Activated naive CD4-positive, alpha-beta T cell treated with anti-CD3 and anti-CD28 coated beads for 36 hours (primary cell): ENCODE measurements at regions of chr4 and their contacts with region 1.

Region 1: GRCh38 chr4:102564399-102565059 is 63.4 kb downstream of the NFKB1 start:
- DNase-seq: peak; percentile 66
- H3K4me3 Mint-ChIP-seq: no peak overlapping the region
- H3K27ac Mint-ChIP-seq: peak overlapping the region; percentile 75
- H3K4me1 Mint-ChIP-seq: peaks cover 78% of the 10 kb centered on the region
- H3K27me3 Mint-ChIP-seq: no peaks in the 10 kb centered on the region

Region 2: DNA sequence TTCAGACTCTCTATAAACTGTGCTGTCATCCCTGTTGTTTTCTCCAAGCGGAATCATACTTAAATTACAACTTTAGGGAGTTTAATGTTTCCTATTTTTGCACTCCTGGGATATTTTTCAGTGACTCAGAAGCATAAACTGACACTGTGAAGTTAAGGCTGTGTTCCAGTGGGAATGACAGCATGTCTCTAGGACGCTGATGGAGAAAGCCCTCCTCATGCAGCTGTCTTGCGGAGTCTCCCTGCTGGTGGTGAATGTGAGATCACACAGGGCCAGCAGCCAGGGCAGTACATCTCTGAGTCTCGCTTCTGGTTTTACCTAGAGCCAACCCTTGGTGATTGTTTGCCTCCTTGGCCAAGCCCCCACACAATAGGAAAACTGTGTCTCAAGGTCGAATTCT is 10.0 kb before region 1 on chr4:
- CTCF ChIA-PET with region 1: interaction called, 4 read pairs
- intact Hi-C with region 1: loop called (anchors 1 kb)
- DNase-seq: no peak
- H3K4me3 Mint-ChIP-seq: no peak overlapping the region
- H3K27ac Mint-ChIP-seq: no peak overlapping the region
- H3K4me1 Mint-ChIP-seq: peaks cover 41% of the 10 kb centered on the region
- H3K27me3 Mint-ChIP-seq: no peaks in the 10 kb centered on the region

Region 3: GRCh38 chr4:102578819-102579218 is 14.3 kb after region 1 on chr4:
- CTCF ChIA-PET with region 1: interaction called, 11 read pairs
- intact Hi-C with region 1: loop called (anchors 1 kb)
- DNase-seq: peak; percentile 24
- H3K4me3 Mint-ChIP-seq: no peak overlapping the region
- H3K27ac Mint-ChIP-seq: no peak overlapping the region
- H3K4me1 Mint-ChIP-seq: peaks cover 65% of the 10 kb centered on the region
- H3K27me3 Mint-ChIP-seq: no peaks in the 10 kb centered on the region

Region 4: DNA sequence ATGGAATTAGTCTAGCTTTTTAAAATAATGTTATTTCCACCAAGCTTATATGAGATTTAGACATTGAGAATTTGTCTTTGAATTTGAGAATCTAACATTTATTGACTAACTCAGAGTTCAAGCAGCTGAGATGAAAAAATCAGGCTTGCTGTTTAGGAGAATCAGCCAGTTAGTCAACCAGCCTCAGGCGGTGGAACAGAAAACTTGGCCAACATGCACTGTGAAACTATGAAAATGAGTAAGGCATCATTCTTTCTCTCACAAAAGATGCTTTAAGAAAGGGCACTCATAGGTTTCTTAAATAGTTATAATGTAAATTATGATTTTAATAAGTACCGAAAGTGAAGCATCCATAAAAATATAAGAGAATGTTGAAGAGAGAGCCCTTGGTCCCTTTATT is 20.8 kb after region 1 on chr4:
- CTCF ChIA-PET with region 1: interaction called, 11 read pairs
- intact Hi-C with region 1: loop called (anchors 1 kb)
- DNase-seq: peak; percentile 60
- H3K4me3 Mint-ChIP-seq: no peak overlapping the region
- H3K27ac Mint-ChIP-seq: peak overlapping the region; percentile 78
- H3K4me1 Mint-ChIP-seq: peaks cover 72% of the 10 kb centered on the region
- H3K27me3 Mint-ChIP-seq: no peaks in the 10 kb centered on the region